MCF 10A (cell line): ENCODE measurements at regions of chrX and their contacts with region 1.

Region 1: DNA sequence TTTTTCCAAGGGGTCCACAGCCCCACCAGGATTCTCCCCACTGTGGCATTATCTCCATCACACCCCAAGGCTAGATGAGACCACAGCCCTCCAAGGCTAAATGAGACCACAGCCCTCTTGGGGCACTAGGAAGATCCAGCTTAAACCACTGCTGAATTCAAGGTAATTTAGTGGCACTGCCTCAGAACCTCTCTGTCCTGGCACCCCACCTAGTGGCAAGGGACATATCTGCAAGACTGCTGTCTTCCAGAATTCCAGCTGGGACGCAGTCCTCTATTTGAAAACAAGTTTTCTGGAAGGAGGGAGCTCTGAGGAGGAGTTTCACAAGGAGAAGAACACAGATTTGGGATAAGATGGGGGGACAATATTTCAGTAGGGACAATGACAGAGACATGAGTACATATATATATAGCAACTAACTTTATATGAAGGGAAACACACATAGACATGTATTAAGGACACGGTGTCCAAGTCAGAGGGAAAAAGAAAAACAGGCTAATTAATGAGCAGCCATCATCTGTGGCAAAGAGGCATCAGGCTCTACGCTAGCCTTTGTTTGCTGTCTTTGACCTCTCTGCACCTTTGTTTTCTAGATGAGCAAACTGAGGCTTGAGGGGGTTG is 9.3 kb downstream of the CETN2 start:
- DNase-seq: peak; percentile 54
- H3K4me3 Mint-ChIP-seq: no peak overlapping the region
- H3K27ac Mint-ChIP-seq: no peak overlapping the region
- H3K4me1 Mint-ChIP-seq: peaks cover 4% of the 10 kb centered on the region
- H3K27me3 Mint-ChIP-seq: no peaks in the 10 kb centered on the region
- CTCF ChIP-seq: peak; percentile 45

Region 2: DNA sequence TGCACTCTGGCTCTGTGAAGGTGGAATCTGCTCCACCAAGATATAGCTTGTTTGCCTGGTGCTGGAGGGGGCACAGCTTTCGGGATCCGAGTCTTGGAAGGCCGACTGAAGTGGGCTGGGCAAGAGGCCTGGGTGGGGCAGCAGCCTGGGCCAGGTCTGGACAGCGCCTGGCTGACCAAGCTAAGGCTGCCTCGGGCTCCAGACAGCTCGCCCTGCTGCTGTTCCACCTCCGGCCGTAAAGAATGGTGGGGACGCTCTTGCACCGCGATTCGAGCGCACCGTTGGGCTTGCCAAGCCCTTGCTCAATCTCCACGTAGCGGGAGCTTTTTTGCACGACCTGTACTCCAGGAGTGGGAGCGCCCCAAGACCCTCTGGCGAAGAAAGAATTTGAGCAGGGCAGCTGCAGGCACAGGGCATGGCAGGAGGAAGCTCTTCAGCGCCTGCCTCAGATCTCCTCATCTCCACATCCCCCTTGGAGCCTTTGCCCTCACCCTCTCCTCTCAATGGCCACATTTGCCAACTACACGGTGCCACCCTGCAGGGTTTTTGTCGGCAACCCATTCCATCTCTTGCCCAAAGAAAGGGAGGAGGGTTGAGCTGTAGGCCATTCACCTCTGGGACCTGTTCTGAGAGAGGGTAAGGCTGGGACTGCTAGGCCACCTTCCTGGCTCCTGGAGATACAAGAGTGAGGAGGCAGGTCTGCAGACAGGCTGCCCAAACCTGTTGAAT is 1067.8 kb before region 1 on chrX:
- CTCF ChIA-PET with region 1: interaction called, 38 read pairs
- POLR2A ChIA-PET with region 1: no interaction called
- intact Hi-C with region 1: loop called (anchors 1 kb)
- DNase-seq: peak; percentile 73
- H3K4me3 Mint-ChIP-seq: peak overlapping the region; percentile 36
- H3K27ac Mint-ChIP-seq: peak overlapping the region; percentile 11
- H3K4me1 Mint-ChIP-seq: peaks cover 12% of the 10 kb centered on the region
- H3K27me3 Mint-ChIP-seq: no peaks in the 10 kb centered on the region
- CTCF ChIP-seq: peak; percentile 78

Region 3: GRCh38 chrX:152641996-152642395 is 179.3 kb before region 1 on chrX:
- CTCF ChIA-PET with region 1: interaction called, 21 read pairs
- POLR2A ChIA-PET with region 1: no interaction called
- intact Hi-C with region 1: no loop called
- DNase-seq: peak; percentile 26
- H3K4me3 Mint-ChIP-seq: no peak overlapping the region
- H3K27ac Mint-ChIP-seq: no peak overlapping the region
- H3K4me1 Mint-ChIP-seq: no peaks in the 10 kb centered on the region
- H3K27me3 Mint-ChIP-seq: no peaks in the 10 kb centered on the region
- CTCF ChIP-seq: no peak